Activated CD4-positive, alpha-beta memory T cell treated with anti-CD3 and anti-CD28 coated beads for 36 hours (primary cell): ENCODE measurements at regions of chr6 and their contacts with region 1.

Region 1: DNA sequence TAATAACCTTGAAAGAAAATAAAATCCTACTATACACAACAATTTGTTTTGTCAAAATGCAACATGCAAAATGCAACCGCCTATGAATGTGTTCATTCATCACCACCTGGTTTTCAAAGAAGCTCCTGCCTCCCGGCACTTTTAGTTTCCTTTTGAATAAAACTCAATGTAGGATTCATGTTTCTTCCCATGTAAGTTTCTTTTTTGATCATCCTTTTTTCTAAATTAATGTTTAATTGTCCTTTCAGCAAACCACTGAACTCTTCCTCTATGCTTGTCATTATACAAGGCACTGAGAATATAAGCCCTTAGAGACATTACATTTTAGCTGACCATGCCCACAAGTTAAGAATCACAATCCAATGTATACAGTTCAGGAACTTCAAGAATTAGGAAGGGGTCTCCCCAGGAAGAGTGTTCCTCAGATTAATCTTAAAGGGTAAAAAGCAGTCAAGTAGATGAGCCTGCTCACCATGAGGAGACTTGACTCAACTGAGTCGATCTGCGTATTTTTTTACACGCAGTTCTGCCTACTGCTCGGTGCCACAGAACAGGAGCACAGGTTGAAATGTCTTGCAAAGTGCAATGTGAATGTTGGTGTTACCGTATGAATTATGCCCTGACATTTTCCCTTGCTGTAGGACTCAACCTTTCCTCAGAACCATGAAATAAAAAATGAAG is 7.2 kb upstream of the THEMIS start:
- DNase-seq: peak; percentile 56
- H3K4me3 Mint-ChIP-seq: peak overlapping the region; percentile 70
- H3K27ac Mint-ChIP-seq: peak overlapping the region; percentile 86
- H3K4me1 Mint-ChIP-seq: peaks cover 67% of the 10 kb centered on the region
- H3K27me3 Mint-ChIP-seq: no peaks in the 10 kb centered on the region

Region 2: GRCh38 chr6:126786262-126786661 is 1121.8 kb before region 1 on chr6:
- CTCF ChIA-PET with region 1: no interaction called
- POLR2A ChIA-PET with region 1: no interaction called
- intact Hi-C with region 1: no loop called
- DNase-seq: no peak
- H3K4me3 Mint-ChIP-seq: no peak overlapping the region
- H3K27ac Mint-ChIP-seq: no peak overlapping the region
- H3K4me1 Mint-ChIP-seq: no peaks in the 10 kb centered on the region
- H3K27me3 Mint-ChIP-seq: no peaks in the 10 kb centered on the region

Region 3: DNA sequence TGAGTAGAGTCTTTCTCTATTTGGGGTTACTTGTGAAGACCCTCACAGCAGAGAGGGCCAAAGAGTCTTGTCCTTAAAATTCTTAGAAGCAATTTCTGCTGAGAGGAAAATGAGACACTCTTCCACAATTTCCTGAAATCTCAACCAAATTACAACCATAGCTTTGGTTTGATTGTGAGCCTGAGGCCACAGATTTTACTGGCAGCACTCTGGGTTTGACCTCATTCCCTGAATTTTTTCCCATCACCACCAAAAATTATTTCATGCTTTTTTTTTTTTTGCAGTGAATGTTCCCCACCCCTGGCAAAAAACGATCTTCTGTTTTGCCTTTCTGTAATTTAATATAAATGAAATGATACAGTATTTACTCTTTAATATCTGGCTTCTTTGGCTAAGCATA is 132.7 kb before region 1 on chr6:
- CTCF ChIA-PET with region 1: no interaction called
- POLR2A ChIA-PET with region 1: no interaction called
- intact Hi-C with region 1: no loop called
- DNase-seq: no peak
- H3K4me3 Mint-ChIP-seq: no peak overlapping the region
- H3K27ac Mint-ChIP-seq: no peak overlapping the region
- H3K4me1 Mint-ChIP-seq: peaks cover 44% of the 10 kb centered on the region
- H3K27me3 Mint-ChIP-seq: no peaks in the 10 kb centered on the region

Region 4: DNA sequence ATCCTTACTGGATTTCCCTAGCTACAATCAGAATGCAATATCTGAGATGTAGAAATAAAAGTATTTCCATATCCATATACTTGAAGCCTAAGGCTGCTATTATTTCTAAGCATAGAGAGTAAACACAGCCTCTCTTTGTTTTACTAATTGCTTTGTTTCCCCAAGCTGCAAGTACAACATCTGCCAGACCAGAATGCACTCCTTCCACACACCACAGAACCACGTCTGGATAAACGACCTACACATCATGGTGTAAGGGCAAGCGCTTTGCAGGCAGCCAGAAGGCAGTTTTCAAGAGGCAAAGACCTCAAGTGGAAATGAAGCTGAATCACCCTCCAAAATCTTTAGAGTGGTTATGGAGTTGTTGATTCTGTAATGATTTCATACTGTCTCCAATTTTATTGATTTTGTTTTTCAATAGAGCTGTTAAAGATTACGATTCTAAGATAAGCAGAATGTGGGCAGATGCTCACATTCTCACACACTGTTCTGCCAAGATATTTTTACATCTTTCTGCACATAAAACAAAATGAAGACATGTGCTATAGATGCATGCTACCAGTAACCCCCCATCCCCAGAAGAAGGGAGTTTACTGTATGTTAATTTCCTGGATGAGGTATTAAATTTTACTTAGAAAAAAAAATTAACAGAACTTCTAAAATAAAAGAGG is 96.1 kb before region 1 on chr6:
- CTCF ChIA-PET with region 1: no interaction called
- POLR2A ChIA-PET with region 1: no interaction called
- intact Hi-C with region 1: loop called (anchors 5 kb)
- DNase-seq: peak; percentile 30
- H3K4me3 Mint-ChIP-seq: peak overlapping the region; percentile 20
- H3K27ac Mint-ChIP-seq: no peak overlapping the region
- H3K4me1 Mint-ChIP-seq: peaks cover 87% of the 10 kb centered on the region
- H3K27me3 Mint-ChIP-seq: no peaks in the 10 kb centered on the region

Region 5: DNA sequence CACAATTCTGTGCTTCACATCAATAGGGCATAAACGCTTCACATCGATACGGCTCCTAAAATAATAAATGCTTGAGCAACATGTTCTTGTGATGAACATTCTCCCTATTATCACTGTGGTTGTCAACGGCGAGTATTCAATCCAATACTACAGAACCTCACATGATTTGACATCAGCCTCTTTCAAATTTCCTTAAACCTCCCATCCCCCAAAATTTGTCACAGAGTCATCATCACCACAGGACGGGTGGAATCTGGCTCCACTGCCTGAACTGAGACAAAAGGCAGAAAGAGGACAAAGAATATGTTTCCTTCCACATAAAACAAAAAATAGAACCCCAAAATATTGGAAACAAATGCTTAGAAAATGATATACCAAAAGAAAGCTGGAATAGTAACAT is 14.6 kb before region 1 on chr6:
- CTCF ChIA-PET with region 1: no interaction called
- POLR2A ChIA-PET with region 1: interaction called, 3 read pairs
- intact Hi-C with region 1: loop called (anchors 1 kb)
- DNase-seq: peak; percentile 51
- H3K4me3 Mint-ChIP-seq: peak overlapping the region; percentile 73
- H3K27ac Mint-ChIP-seq: peak overlapping the region; percentile 84
- H3K4me1 Mint-ChIP-seq: peaks cover 52% of the 10 kb centered on the region
- H3K27me3 Mint-ChIP-seq: no peaks in the 10 kb centered on the region

Region 6: DNA sequence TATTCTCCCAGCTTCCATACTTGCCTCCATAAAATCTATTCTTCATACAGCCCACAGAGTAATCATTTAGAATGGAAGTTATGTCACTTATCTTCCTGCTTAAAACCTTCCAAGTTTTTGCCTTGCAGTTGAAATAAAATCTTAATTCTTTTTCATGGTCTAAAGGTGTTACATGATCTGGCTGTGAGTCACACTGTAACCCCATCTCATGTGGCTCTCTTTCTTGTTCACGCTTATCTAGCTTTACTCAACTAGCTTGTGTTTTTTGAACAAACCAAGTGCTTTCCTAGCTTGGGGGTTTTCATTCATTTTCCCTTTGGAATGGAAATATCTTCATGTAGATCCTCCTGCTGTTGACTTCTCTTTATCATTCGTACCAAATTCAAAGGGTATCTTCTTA is 16.3 kb after region 1 on chr6:
- CTCF ChIA-PET with region 1: no interaction called
- POLR2A ChIA-PET with region 1: interaction called, 8 read pairs
- intact Hi-C with region 1: loop called (anchors 2 kb)
- DNase-seq: no peak
- H3K4me3 Mint-ChIP-seq: no peak overlapping the region
- H3K27ac Mint-ChIP-seq: peak overlapping the region; percentile 9
- H3K4me1 Mint-ChIP-seq: peaks cover 56% of the 10 kb centered on the region
- H3K27me3 Mint-ChIP-seq: no peaks in the 10 kb centered on the region

Region 7: GRCh38 chr6:127951172-127951917 is 43.2 kb after region 1 on chr6:
- CTCF ChIA-PET with region 1: no interaction called
- POLR2A ChIA-PET with region 1: interaction called, 3 read pairs
- intact Hi-C with region 1: loop called (anchors 1 kb)
- DNase-seq: no peak
- H3K4me3 Mint-ChIP-seq: peak overlapping the region; percentile 43
- H3K27ac Mint-ChIP-seq: peak overlapping the region; percentile 55
- H3K4me1 Mint-ChIP-seq: peaks cover 48% of the 10 kb centered on the region
- H3K27me3 Mint-ChIP-seq: no peaks in the 10 kb centered on the region